ENCODE measurements at regions of chr2 and their contacts with region 1.

Region 1: GRCh38 chr2:45922571-45922988 is 271.1 kb downstream of the PRKCE start:
- DNase-seq: peak; percentile 64 to 78
- ATAC-seq: peak; percentile 92 to 97 (median 93)
- H3K4me3 ChIP-seq: no peak overlapping the region
- H3K27ac ChIP-seq: peak overlapping the region in 9 of 10 donors; percentile 33 to 72 (median 60)
- H3K4me1 ChIP-seq: peaks cover 8 to 67% (median 44%) of the 10 kb centered on the region in 9 donors
- H3K27me3 ChIP-seq: no peaks in the 10 kb centered on the region
- CTCF ChIP-seq: no peak

Region 2: DNA sequence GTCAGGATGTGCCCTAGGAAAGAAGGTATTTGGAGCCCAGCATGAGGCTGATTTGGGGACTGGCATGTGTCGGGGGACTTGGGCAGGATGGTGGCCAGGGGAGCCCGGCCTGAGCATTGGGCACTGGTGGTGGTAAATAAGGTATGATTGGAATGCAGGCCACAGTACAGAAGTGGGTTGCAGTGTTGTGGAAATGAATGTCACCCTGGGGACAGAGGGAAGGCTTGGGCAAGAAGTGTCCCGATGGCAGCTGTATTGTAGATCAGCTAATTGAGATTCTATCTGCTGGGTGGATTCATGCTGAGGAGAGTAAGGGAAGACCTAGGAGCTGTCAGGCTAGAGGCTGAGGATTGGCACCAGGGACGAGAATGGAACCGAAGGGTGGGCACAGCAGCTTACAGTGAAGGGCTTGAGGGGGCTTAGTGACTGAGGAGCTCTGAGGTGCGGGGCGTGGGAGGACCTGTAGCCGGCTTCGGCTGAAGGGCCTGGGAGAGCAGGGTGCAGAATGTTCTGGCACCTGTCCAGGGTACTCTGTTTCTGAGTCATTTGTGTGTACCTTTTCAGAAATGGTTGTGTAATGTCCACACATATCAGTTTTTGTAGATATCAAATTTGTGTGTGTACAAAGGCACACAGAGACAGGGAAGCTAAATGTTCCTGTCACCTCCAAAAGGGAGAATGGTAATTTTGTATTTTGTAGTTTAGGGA is 100.9 kb before region 1 on chr2:
- intact Hi-C with region 1: loop called in 3 of 10 experiments (anchors 5 to 10 kb)
- DNase-seq: peak; percentile 26 to 27
- ATAC-seq: peak in 5 of 8 donors; percentile 13 to 67 (median 41)
- H3K4me3 ChIP-seq: no peak overlapping the region
- H3K27ac ChIP-seq: peak overlapping the region in 8 of 10 donors; percentile 5 to 61 (median 45)
- H3K4me1 ChIP-seq: peaks cover 12 to 67% (median 38%) of the 10 kb centered on the region in 9 donors
- H3K27me3 ChIP-seq: no peaks in the 10 kb centered on the region
- CTCF ChIP-seq: no peak

Region 3: DNA sequence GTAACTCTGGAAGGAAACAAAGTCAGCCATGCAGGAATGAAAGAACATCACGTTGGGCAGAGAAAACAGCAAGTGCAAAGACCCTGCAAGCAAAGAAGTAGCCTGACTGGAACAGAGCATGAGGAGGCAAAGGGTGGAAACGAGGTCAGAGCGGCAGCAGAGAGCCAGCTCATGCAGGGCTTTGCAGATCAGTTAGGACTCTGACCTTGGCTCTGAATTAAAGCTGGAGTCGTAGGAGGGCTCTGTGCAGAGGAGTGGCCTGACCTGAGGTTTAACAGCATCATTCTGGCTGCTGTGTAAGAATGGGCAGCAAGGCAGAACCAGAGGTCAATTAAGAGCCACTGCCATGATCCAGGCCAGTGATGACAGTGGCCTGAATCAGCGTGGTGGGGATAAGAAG is 50.4 kb before region 1 on chr2:
- intact Hi-C with region 1: no loop called
- DNase-seq: no peak
- ATAC-seq: no peak
- H3K4me3 ChIP-seq: no peak overlapping the region
- H3K27ac ChIP-seq: no peak overlapping the region
- H3K4me1 ChIP-seq: peaks cover 0 to 34% (median 16%) of the 10 kb centered on the region in 9 donors
- H3K27me3 ChIP-seq: no peaks in the 10 kb centered on the region
- CTCF ChIP-seq: no peak

Region 4: DNA sequence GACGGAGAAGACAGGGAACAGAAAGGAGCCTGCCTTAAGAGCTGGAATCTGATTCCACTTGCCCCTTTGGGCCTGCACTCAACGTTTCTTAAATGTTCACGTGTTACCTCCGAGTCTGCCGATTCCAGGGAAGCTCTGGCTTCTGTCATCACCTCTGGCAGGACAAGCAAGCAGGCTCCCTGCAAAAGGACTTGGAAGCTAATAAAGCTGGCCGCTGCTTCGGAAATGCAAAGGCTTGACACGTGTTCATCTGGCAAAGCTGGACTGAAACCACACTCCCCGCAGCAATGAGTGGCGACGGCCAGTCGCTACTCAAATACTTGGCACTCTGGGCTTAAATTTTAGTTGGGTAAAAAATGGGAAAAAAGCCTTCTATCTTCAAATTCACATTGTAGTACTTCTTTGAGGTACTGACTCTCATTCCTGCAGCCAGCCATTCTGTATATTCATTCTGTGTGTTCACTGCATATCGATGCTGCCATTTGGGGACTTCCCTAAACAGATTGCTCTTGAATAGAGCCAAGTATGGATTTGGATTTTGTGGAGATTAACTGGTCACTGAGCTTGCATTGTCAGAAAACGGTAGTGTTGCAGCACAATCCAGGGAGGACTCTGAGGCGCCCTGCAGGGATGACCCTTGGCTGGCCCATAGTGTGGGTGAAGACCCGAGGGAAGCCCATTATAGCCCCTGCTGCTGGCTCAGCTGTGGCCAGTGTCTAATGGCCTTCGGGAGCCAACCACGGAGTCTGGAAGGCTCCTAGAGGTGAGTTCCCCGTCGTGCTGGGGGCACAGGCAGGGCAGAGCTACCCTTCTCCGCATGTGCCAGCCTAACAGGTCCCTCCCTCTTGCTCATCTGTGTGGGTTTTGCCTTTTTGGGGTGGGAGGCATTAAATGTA is 39.6 kb before region 1 on chr2:
- intact Hi-C with region 1: loop called in 4 of 10 experiments (anchors 5 kb)
- DNase-seq: peak; percentile 50 to 69
- ATAC-seq: peak; percentile 20 to 85 (median 74)
- H3K4me3 ChIP-seq: no peak overlapping the region
- H3K27ac ChIP-seq: peak overlapping the region in 7 of 10 donors; percentile 15 to 67 (median 52)
- H3K4me1 ChIP-seq: peaks cover 24 to 66% (median 56%) of the 10 kb centered on the region in 9 donors
- H3K27me3 ChIP-seq: no peaks in the 10 kb centered on the region
- CTCF ChIP-seq: no peak

Region 5: GRCh38 chr2:45889053-45889452 is 33.5 kb before region 1 on chr2:
- intact Hi-C with region 1: loop called in 4 of 10 experiments (anchors 5 kb)
- DNase-seq: peak in 1 of 2 donors; percentile 31
- ATAC-seq: peak in 7 of 8 donors; percentile 37 to 70 (median 53)
- H3K4me3 ChIP-seq: no peak overlapping the region
- H3K27ac ChIP-seq: no peak overlapping the region
- H3K4me1 ChIP-seq: peaks cover 8 to 98% (median 68%) of the 10 kb centered on the region in 9 donors
- H3K27me3 ChIP-seq: no peaks in the 10 kb centered on the region
- CTCF ChIP-seq: peak in 4 of 9 donors; percentile 4 to 22 (median 6)

Region 6: DNA sequence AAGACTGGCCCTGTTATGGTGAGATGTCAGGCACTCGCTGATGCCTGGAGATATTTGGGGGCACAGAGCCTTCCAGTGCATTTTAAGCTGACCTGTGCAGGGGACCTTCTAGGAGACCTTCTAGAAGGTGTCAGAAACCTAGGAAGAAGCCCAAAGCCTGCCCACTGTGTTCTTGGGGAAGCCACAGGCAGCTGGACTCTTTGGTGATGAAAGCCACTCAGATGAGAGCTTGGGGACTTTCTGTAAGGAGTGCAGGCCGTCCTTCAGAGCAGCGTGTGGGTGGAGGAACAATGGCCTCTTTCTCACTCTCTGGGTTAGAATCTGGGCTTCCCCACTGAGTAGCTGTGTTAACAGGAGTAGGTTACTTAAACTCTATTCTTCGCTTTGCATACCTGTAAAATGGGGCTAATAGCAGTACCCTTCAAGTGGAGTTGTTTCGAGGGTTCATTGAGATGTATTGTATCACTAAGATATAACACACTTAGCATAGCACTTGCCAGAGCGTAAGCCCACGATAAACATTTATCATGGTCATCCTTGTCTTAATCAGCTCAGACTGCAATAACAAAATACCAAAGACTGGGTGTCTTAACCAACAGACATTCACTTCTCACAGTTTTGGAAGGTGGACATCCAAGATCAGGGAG is 52.3 kb after region 1 on chr2:
- intact Hi-C with region 1: no loop called
- DNase-seq: no peak
- ATAC-seq: peak in 2 of 8 donors; percentile 17 to 18
- H3K4me3 ChIP-seq: no peak overlapping the region
- H3K27ac ChIP-seq: no peak overlapping the region
- H3K4me1 ChIP-seq: peaks cover 0 to 3% (median 0%) of the 10 kb centered on the region in 9 donors
- H3K27me3 ChIP-seq: no peaks in the 10 kb centered on the region
- CTCF ChIP-seq: no peak